Ovary (tissue), 10 donors: ENCODE measurements at regions of chr5 and their contacts with region 1.

Region 1: GRCh38 chr5:164504141-164504772 is 998.8 kb downstream of the MAT2B start:
- DNase-seq: peak in 1 of 5 donors; percentile 15
- H3K4me3 ChIP-seq: no peak overlapping the region
- H3K27ac ChIP-seq: no peak overlapping the region
- H3K4me1 ChIP-seq: no peaks in the 10 kb centered on the region
- H3K27me3 ChIP-seq: no peaks in the 10 kb centered on the region
- CTCF ChIP-seq: peak in 2 of 3 donors; percentile 11 to 68
- EP300 ChIP-seq: no peak
- POLR2A ChIP-seq: no peak

Region 2: DNA sequence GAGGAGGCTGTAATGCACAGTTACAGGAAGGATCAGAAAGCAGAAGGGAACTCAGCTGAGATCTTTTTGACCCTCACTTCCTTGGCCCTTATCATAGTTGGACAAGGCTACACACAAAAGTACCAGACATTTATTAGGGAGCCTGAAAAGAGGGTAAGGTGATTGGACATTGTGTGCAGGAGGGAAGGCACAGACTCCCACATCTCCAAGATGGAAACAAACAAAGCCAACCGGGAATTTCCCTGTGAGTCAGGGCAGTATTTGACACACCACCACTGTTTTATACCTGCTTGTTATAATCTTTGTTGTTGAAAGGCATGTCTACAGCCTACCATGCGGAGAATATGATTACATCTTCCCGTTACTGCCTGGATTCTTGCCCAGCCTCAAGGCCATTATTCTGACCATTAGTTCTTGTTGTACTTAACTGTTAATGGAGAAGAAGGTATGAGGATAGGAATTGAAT is 1069.8 kb before region 1 on chr5:
- intact Hi-C with region 1: no loop called
- DNase-seq: peak in 3 of 5 donors; percentile 19 to 31 (median 23)
- H3K4me3 ChIP-seq: no peak overlapping the region
- H3K27ac ChIP-seq: no peak overlapping the region
- H3K4me1 ChIP-seq: peaks cover 9% of the 10 kb centered on the region
- H3K27me3 ChIP-seq: no peaks in the 10 kb centered on the region
- CTCF ChIP-seq: no peak
- EP300 ChIP-seq: no peak
- POLR2A ChIP-seq: no peak

Region 3: DNA sequence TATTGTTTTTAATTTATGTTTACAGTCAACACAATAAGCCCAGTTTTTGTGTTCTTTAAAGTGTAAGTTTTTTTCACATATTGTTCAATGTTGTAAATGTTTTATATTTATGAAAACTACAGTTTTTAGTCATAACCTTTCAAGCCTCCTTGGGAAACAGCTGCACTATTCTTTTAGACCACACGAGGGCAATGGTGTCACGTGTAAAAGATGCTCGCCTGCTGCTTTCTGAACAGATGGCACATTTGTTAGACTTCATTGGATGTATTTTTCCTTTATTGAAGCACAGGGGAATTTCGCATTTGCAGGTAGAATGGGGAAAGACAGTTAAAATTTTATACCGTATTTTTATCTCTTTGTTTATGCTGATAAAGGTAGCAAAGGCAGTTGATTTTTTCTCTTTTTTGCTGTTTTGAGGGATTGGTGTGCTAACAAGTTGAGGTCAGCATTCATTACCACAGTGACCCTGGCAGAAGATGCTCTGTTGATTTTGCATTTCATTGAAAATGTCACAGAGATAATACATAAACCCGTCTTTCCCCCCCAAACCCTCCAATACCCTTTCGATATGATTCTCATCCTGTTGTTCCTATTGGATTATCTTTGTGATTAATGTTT is 939.8 kb before region 1 on chr5:
- intact Hi-C with region 1: loop called in 1 of 4 experiments (anchors 10 kb)
- DNase-seq: peak; percentile 21 to 66 (median 50)
- H3K4me3 ChIP-seq: no peak overlapping the region
- H3K27ac ChIP-seq: no peak overlapping the region
- H3K4me1 ChIP-seq: peaks cover 4% of the 10 kb centered on the region
- H3K27me3 ChIP-seq: no peaks in the 10 kb centered on the region
- CTCF ChIP-seq: peak; percentile 41 to 77 (median 71)
- EP300 ChIP-seq: no peak
- POLR2A ChIP-seq: no peak

Region 4: DNA sequence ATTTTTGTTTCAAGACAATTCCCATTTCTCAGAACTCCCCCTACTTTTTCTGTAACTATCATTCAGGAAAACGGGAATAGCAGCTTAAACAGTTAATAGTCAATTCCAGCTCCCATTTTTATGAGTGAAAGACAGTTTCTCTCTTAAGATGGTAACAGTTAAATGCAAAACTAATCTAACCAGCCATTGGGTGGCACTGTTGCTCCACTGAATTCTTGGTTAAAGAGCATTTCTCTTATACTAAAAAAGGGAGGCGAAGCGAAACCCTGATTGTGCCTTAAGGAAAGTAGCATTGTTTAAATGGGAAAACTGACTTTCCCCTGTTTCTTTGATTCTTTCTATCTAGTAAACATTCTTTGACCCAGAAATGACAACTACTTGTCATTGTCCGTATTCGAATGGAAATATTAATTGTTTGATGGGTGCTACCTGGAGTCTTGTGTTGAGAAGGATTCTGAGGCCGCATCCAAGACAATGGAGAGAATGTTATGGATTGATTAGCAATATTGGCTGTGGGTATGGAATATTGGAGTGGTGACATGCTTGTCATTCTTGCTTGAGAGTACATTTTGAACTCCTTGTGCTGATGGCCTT is 491.1 kb before region 1 on chr5:
- intact Hi-C with region 1: loop called in 1 of 4 experiments (anchors 10 kb)
- DNase-seq: peak in 4 of 5 donors; percentile 11 to 40 (median 30)
- H3K4me3 ChIP-seq: no peak overlapping the region
- H3K27ac ChIP-seq: no peak overlapping the region
- H3K4me1 ChIP-seq: no peaks in the 10 kb centered on the region
- H3K27me3 ChIP-seq: no peaks in the 10 kb centered on the region
- CTCF ChIP-seq: peak in 2 of 3 donors; percentile 18 to 57
- EP300 ChIP-seq: no peak
- POLR2A ChIP-seq: no peak

Region 5: GRCh38 chr5:164253764-164254163 is 250.5 kb before region 1 on chr5:
- intact Hi-C with region 1: no loop called
- DNase-seq: no peak
- H3K4me3 ChIP-seq: no peak overlapping the region
- H3K27ac ChIP-seq: no peak overlapping the region
- H3K4me1 ChIP-seq: no peaks in the 10 kb centered on the region
- H3K27me3 ChIP-seq: no peaks in the 10 kb centered on the region
- CTCF ChIP-seq: no peak
- EP300 ChIP-seq: no peak
- POLR2A ChIP-seq: no peak

Region 6: GRCh38 chr5:164265566-164265965 is 238.7 kb before region 1 on chr5:
- intact Hi-C with region 1: no loop called
- DNase-seq: no peak
- H3K4me3 ChIP-seq: no peak overlapping the region
- H3K27ac ChIP-seq: no peak overlapping the region
- H3K4me1 ChIP-seq: no peaks in the 10 kb centered on the region
- H3K27me3 ChIP-seq: no peaks in the 10 kb centered on the region
- CTCF ChIP-seq: no peak
- EP300 ChIP-seq: no peak
- POLR2A ChIP-seq: no peak

Region 7: DNA sequence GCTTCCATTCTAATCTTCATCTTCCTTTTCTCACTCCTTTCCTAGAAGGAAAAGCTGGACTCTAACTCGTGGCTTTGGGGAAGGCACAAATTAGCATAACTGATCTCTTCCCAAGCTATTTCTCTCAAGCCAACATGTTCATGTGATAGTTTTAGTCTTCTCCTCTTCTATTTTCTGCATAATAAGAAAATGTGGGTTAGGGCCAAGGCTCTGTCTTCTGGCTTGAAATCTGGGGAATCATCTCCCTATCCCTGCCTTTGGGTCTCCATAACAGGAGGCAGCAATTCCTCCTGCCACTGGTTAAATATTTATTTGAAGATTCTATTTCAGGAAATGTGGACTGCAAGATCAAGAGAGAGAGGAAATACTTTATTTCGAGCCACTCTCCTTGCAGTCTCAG is 670.8 kb after region 1 on chr5:
- intact Hi-C with region 1: no loop called
- DNase-seq: no peak
- H3K4me3 ChIP-seq: no peak overlapping the region
- H3K27ac ChIP-seq: no peak overlapping the region
- H3K4me1 ChIP-seq: no peaks in the 10 kb centered on the region
- H3K27me3 ChIP-seq: no peaks in the 10 kb centered on the region
- CTCF ChIP-seq: no peak
- EP300 ChIP-seq: no peak
- POLR2A ChIP-seq: no peak